ENCODE measurements at regions of chr13 and their contacts with region 1.

Region 1: DNA sequence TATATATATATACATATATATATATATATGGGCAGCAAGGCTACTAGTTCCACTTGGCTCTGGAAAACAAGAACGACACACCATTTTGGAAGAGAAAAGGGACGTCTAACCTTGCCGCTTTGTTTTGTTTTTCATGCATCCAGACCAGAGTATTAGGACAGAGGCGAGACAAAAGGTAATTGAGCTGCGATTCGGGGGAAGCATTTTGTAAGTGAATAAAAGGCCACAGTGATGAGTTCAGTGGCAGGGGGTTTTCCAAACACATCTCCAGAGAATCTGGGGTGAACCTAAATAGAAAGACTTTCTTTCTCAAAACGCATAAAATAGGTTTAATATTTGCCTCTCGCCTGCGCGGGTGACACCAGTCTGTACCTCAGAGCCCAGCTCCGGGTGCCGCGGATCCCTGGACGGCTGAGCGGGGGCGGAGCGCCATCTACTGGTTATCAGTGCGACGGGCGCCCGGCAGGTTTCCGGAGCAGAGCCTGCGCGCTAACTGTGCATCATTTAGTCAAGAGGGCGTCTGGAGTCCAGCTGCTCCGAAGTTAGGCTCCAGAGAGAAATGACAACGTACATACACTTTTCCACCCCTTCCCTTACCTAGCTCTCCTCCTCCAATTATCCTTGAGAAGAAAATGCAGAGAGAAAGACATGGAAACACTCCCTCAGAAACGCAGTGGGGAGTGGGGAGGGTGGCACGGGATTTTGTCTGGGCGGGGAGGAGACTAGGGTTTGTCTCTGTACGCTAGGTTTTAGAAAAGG is 262.3 kb downstream of the TBC1D4 start:
- DNase-seq: peak; percentile 66
- H3K4me3 ChIP-seq: no peak overlapping the region
- H3K27ac ChIP-seq: no peak overlapping the region
- H3K4me1 ChIP-seq: no peaks in the 10 kb centered on the region
- CTCF ChIP-seq: peak; percentile 97

Region 2: GRCh38 chr13:73754727-73755292 is 1464.8 kb before region 1 on chr13:
- CTCF ChIA-PET with region 1: no interaction called
- POLR2A ChIA-PET with region 1: no interaction called
- intact Hi-C with region 1: loop called (anchors 5 kb)
- DNase-seq: peak; percentile 66
- H3K4me3 ChIP-seq: no peak overlapping the region
- H3K27ac ChIP-seq: no peak overlapping the region
- H3K4me1 ChIP-seq: no peaks in the 10 kb centered on the region
- CTCF ChIP-seq: peak; percentile 89

Region 3: GRCh38 chr13:73835138-73835721 is 1384.4 kb before region 1 on chr13:
- CTCF ChIA-PET with region 1: no interaction called
- POLR2A ChIA-PET with region 1: no interaction called
- intact Hi-C with region 1: loop called (anchors 5 kb)
- DNase-seq: peak; percentile 73
- H3K4me3 ChIP-seq: no peak overlapping the region
- H3K27ac ChIP-seq: no peak overlapping the region
- H3K4me1 ChIP-seq: peaks cover 14% of the 10 kb centered on the region
- CTCF ChIP-seq: peak; percentile 88